Activated CD4-positive, alpha-beta T cell treated with anti-CD3 and anti-CD28 coated beads, Interleukin-2, amount 10 ng/mL, durations not matched to agents 24 days and 14 days (primary cell): ENCODE measurements at regions of chr2 and their contacts with region 1.

Region 1: GRCh38 chr2:134118279-134119116 is 135.4 kb upstream of the MGAT5 start:
- DNase-seq: peak; percentile 94
- H3K4me3 Mint-ChIP-seq: peak overlapping the region; percentile 94
- H3K27ac Mint-ChIP-seq: no peak overlapping the region
- H3K4me1 Mint-ChIP-seq: peaks cover 32% of the 10 kb centered on the region
- H3K27me3 Mint-ChIP-seq: peaks cover 20% of the 10 kb centered on the region

Region 2: DNA sequence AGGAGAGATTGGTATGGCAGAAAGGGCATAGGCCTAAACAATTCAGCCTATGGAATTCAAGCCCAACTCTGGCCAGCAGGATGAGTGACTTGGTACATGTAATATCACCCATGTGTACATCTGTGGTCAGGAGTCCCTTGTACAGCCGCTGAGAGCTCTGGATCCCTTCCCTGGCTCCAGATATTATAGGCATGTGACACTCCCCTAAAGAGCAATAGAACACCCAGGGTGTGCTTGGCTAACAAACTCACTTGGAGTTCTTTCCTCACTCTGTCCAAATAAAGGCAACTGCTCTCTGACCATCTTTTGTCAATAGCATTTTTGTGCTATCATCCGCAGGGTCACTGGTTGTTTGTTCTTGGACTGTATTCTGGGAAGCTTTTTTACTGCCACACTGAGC is 352.8 kb before region 1 on chr2:
- intact Hi-C with region 1: no loop called
- DNase-seq: no peak
- H3K4me3 Mint-ChIP-seq: no peak overlapping the region
- H3K27ac Mint-ChIP-seq: no peak overlapping the region
- H3K4me1 Mint-ChIP-seq: no peaks in the 10 kb centered on the region
- H3K27me3 Mint-ChIP-seq: no peaks in the 10 kb centered on the region

Region 3: DNA sequence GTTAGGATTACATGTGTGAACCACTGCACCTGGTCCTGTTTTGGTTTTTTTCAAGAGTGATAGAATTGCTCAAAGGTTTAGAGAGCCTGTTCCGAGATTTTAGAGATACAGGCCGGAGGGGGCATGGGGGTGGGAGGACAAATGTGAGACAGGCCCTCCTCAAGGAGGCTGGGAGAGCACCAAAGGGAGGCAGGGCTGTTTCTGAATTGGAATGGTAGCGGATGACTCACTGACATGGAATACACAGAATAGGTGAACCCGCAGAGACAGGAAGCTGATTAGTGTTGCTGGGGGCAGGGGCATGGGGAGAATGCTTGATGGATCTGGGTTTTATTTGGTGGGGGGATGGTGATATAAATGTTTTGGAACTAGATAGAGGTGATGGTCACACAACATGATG is 24.4 kb after region 1 on chr2:
- intact Hi-C with region 1: no loop called
- DNase-seq: no peak
- H3K4me3 Mint-ChIP-seq: no peak overlapping the region
- H3K27ac Mint-ChIP-seq: no peak overlapping the region
- H3K4me1 Mint-ChIP-seq: peaks cover 21% of the 10 kb centered on the region
- H3K27me3 Mint-ChIP-seq: no peaks in the 10 kb centered on the region

Region 4: DNA sequence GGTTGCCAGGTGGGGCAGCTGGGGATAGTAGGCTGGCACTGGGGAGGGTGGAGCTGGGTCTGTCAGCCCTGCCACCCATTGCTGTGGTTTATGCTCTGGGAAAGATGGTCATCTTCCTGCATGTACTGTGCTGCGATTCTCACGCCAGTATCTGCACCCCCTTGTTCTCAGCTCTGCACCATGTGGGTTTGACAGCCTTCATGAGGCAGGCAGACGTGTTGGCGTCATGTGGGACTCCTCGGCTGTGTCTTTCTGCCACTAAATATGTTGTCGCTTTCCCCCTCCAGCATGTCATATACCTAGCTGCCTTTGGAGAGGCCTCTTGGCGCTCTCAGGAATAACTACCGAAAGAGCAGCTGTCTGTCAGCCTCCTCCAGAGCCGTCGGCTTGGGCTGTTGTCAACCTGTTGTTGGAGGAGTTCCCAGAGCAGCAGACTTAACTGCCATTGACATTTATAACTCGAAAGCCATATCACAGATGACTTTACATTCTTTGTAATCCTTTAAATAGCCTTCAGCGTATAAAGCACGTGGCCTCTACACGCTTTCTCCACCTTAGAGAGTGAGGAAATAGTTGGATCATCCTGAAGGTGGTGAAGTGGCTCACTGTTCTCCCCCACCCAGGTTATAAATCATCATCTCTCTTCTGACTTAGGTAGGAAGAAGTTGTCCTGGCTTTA is 55.0 kb after region 1 on chr2:
- intact Hi-C with region 1: loop called (anchors 2 kb)
- DNase-seq: no peak
- H3K4me3 Mint-ChIP-seq: no peak overlapping the region
- H3K27ac Mint-ChIP-seq: no peak overlapping the region
- H3K4me1 Mint-ChIP-seq: peaks cover 15% of the 10 kb centered on the region
- H3K27me3 Mint-ChIP-seq: no peaks in the 10 kb centered on the region

Region 5: DNA sequence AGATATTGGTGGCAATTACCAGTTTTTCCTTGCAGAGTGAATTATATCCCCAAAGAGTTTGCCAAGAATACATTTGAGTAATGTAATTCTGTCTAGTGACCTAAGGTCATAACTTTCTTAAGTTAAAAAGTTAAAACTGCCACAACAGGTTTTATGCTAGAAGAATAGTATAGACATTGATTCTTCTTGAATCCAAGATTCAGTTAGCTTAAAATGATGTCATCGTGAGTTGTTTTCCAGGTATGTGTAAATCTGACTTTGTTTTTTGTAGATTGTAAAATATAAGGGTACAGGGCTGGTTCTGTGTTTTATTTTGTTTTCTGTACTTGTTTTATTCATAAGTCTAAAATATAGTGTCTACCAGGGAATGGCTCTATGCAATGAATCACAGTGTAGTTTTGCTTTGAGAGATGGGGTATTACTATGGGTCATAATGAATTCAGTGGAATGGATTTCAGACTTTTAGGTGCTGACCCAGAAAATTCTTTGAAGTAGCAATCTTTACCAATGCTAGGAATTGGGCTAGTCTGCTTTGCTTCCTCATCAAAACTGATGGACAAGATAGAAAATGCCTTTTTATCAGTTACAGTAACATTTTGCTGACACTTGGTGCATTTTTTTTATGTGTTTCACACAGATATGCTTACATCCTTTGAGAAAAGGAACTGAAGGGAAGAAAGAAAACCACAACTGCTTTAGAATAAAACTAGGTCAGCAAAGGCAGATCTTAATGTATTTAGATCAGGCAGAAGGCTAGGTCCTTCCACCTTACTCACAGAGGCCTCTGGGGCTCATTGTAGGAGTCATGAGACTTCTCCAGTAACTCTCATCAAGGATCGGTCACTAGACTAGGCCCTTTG is 114.6 kb after region 1 on chr2:
- intact Hi-C with region 1: loop called (anchors 1 kb)
- DNase-seq: peak; percentile 75
- H3K4me3 Mint-ChIP-seq: peak overlapping the region; percentile 67
- H3K27ac Mint-ChIP-seq: peak overlapping the region; percentile 84
- H3K4me1 Mint-ChIP-seq: peaks cover 58% of the 10 kb centered on the region
- H3K27me3 Mint-ChIP-seq: no peaks in the 10 kb centered on the region

Region 6: GRCh38 chr2:134268265-134268664 is 149.8 kb after region 1 on chr2:
- intact Hi-C with region 1: no loop called
- DNase-seq: no peak
- H3K4me3 Mint-ChIP-seq: no peak overlapping the region
- H3K27ac Mint-ChIP-seq: no peak overlapping the region
- H3K4me1 Mint-ChIP-seq: peaks cover 21% of the 10 kb centered on the region
- H3K27me3 Mint-ChIP-seq: no peaks in the 10 kb centered on the region

Region 7: GRCh38 chr2:134282629-134283400 is 164.3 kb after region 1 on chr2:
- intact Hi-C with region 1: loop called (anchors 1 kb)
- DNase-seq: peak; percentile 79
- H3K4me3 Mint-ChIP-seq: peak overlapping the region; percentile 58
- H3K27ac Mint-ChIP-seq: peak overlapping the region; percentile 86
- H3K4me1 Mint-ChIP-seq: peaks cover 44% of the 10 kb centered on the region
- H3K27me3 Mint-ChIP-seq: no peaks in the 10 kb centered on the region

Region 8: GRCh38 chr2:134451347-134451630 is 332.8 kb after region 1 on chr2:
- intact Hi-C with region 1: loop called (anchors 1 kb)
- DNase-seq: no peak
- H3K4me3 Mint-ChIP-seq: no peak overlapping the region
- H3K27ac Mint-ChIP-seq: no peak overlapping the region
- H3K4me1 Mint-ChIP-seq: no peaks in the 10 kb centered on the region
- H3K27me3 Mint-ChIP-seq: no peaks in the 10 kb centered on the region

Region 9: GRCh38 chr2:134918526-134919340 is 800.2 kb after region 1 on chr2 and contains the start of gene CCNT2:
- intact Hi-C with region 1: loop called (anchors 2 kb)
- DNase-seq: peak; percentile 100
- H3K4me3 Mint-ChIP-seq: peak within 1 kb of the TSS; percentile 96
- H3K27ac Mint-ChIP-seq: peak within 1 kb of the TSS; percentile 97
- H3K4me1 Mint-ChIP-seq: peaks cover 23% of the 10 kb centered on the region
- H3K27me3 Mint-ChIP-seq: peaks cover 6% of the 10 kb centered on the region
- total RNA-seq, gene CCNT2: 46.0 and 48.5 TPM in 2 replicates